Activated CD8-positive, alpha-beta memory T cell treated with anti-CD3 and anti-CD28 coated beads, Interleukin-2, amount 10 ng/mL, durations not matched to agents 7 days and 5 days (primary cell): ENCODE measurements at regions of chr19 and their contacts with region 1.

Region 1: GRCh38 chr19:35135389-35135909 is 590 bp upstream of the LGI4 start:
- DNase-seq: peak; percentile 76
- ATAC-seq: peak; percentile 83
- H3K4me3 Mint-ChIP-seq: no peak overlapping the region
- H3K27ac Mint-ChIP-seq: no peak overlapping the region
- H3K4me1 Mint-ChIP-seq: peaks cover 5% of the 10 kb centered on the region
- H3K27me3 Mint-ChIP-seq: peaks cover 6% of the 10 kb centered on the region

Region 2: GRCh38 chr19:34932494-34932893 is 203.0 kb before region 1 on chr19:
- CTCF ChIA-PET with region 1: no interaction called
- DNase-seq: no peak
- ATAC-seq: no peak
- H3K4me3 Mint-ChIP-seq: no peak overlapping the region
- H3K27ac Mint-ChIP-seq: no peak overlapping the region
- H3K4me1 Mint-ChIP-seq: peaks cover 3% of the 10 kb centered on the region
- H3K27me3 Mint-ChIP-seq: no peaks in the 10 kb centered on the region

Region 3: GRCh38 chr19:35044317-35045117 is 90.9 kb before region 1 on chr19:
- CTCF ChIA-PET with region 1: interaction called, 12 read pairs
- DNase-seq: peak; percentile 66
- ATAC-seq: no peak
- H3K4me3 Mint-ChIP-seq: no peak overlapping the region
- H3K27ac Mint-ChIP-seq: no peak overlapping the region
- H3K4me1 Mint-ChIP-seq: peaks cover 17% of the 10 kb centered on the region
- H3K27me3 Mint-ChIP-seq: peaks cover 10% of the 10 kb centered on the region

Region 4: GRCh38 chr19:35066691-35067563 is 68.5 kb before region 1 on chr19:
- CTCF ChIA-PET with region 1: interaction called, 19 read pairs
- DNase-seq: peak; percentile 90
- ATAC-seq: peak; percentile 92
- H3K4me3 Mint-ChIP-seq: no peak overlapping the region
- H3K27ac Mint-ChIP-seq: peak overlapping the region; percentile 22
- H3K4me1 Mint-ChIP-seq: peaks cover 8% of the 10 kb centered on the region
- H3K27me3 Mint-ChIP-seq: peaks cover 10% of the 10 kb centered on the region

Region 5: GRCh38 chr19:35114353-35115176 is 20.9 kb before region 1 on chr19:
- CTCF ChIA-PET with region 1: interaction called, 14 read pairs
- DNase-seq: peak; percentile 65
- ATAC-seq: peak; percentile 75
- H3K4me3 Mint-ChIP-seq: no peak overlapping the region
- H3K27ac Mint-ChIP-seq: no peak overlapping the region
- H3K4me1 Mint-ChIP-seq: peaks cover 3% of the 10 kb centered on the region
- H3K27me3 Mint-ChIP-seq: no peaks in the 10 kb centered on the region

Region 6: GRCh38 chr19:35124098-35125060 is 11.1 kb before region 1 on chr19:
- CTCF ChIA-PET with region 1: interaction called, 24 read pairs
- DNase-seq: peak; percentile 90
- ATAC-seq: peak; percentile 98
- H3K4me3 Mint-ChIP-seq: peak overlapping the region; percentile 67
- H3K27ac Mint-ChIP-seq: peak overlapping the region; percentile 39
- H3K4me1 Mint-ChIP-seq: peaks cover 12% of the 10 kb centered on the region
- H3K27me3 Mint-ChIP-seq: no peaks in the 10 kb centered on the region

Region 7: GRCh38 chr19:35154525-35155406 is 19.3 kb after region 1 on chr19 and contains the start of gene FXYD5:
- CTCF ChIA-PET with region 1: interaction called, 90 read pairs
- DNase-seq: peak; percentile 80
- ATAC-seq: peak; percentile 79
- H3K4me3 Mint-ChIP-seq: peak within 1 kb of the TSS; percentile 97
- H3K27ac Mint-ChIP-seq: peak within 1 kb of the TSS; percentile 97
- H3K4me1 Mint-ChIP-seq: peaks cover 42% of the 10 kb centered on the region
- H3K27me3 Mint-ChIP-seq: peaks cover 4% of the 10 kb centered on the region
- total RNA-seq, gene FXYD5: 262 to 354 TPM

Region 8: DNA sequence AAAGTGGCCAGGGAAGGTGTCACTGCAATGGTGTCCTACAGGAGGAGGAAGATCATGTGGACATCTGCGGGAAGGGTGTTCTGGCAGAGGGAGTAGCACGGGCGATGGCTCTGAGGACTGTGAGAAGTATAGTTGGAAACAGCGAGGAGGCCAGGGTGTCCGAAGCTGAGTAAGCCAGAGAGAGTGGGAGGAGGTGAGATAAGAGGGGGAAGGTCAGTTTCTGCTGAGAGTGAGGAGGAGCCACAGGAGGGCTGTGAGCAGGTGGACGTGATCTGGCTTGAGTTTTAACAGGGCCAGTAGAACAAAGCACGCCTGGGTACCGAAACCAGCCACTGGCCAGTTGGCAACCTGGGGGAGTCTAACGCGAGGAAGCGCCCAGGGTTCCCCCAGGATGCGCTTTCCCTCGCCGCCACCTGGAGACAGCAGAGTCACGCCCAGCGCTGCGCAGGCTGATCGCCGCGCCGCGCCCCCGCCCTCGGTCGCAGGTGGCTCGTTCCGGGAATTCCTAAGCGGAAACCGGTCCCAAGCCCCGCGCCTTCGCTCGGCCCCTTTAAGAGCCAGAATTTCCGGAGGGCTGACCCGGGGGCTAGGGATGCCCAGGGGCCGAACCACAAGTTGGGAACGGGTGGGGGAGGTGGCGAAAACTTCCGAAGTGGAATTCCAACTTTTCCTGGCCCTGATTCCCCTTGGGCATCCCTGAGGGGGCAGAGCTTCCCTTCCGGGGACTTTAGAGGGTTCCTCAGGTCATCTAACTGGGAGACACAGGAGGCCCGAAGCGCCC is 112.3 kb after region 1 on chr19:
- CTCF ChIA-PET with region 1: no interaction called
- DNase-seq: peak; percentile 57
- ATAC-seq: peak; percentile 52
- H3K4me3 Mint-ChIP-seq: peak overlapping the region; percentile 79
- H3K27ac Mint-ChIP-seq: peak overlapping the region; percentile 84
- H3K4me1 Mint-ChIP-seq: peaks cover 25% of the 10 kb centered on the region
- H3K27me3 Mint-ChIP-seq: peaks cover 44% of the 10 kb centered on the region